Right ventricle myocardium inferior (tissue), 1 donor: ENCODE measurements at regions of chr6 and their contacts with region 1.

Region 1: DNA sequence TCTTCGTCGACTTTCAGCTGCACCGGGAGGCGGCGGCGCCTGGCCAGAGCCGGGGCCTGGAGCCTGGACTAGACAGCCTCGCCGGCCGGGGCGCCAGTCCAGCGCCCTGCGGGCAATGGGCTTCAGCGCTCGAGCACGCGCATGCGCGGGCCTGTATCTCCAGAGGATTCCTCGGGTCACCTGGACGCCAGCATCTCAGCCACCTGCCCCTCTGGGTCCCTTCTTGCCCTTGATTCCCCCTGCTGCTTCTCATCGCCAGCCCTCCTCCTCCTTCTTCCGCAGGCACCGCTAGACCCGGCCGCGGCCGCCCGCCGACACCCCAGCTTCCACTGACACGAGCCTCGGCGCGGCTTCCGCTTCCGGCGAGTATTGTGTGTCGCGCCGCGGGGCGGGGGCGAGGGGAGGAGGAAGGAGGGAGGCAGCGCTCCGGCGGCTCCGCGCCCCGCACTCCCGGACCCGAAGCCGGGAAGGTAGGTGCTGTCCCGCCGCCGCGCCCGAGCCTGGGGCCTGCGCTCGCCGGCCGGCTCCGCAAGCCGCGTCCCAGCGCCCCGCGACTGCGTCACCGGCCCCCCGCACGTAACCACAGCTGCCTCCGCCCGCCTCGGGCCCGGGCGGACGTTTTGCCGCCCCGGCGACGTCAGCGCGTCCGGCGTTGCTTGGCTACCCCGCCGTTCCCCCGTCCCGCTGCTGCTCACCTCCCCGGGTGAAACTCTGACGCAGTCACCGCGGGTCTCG is at the start of gene TRIM39:
- DNase-seq: peak; percentile 98
- ATAC-seq: peak; percentile 91
- total RNA-seq, gene TRIM39: 8.3 TPM

Region 2: DNA sequence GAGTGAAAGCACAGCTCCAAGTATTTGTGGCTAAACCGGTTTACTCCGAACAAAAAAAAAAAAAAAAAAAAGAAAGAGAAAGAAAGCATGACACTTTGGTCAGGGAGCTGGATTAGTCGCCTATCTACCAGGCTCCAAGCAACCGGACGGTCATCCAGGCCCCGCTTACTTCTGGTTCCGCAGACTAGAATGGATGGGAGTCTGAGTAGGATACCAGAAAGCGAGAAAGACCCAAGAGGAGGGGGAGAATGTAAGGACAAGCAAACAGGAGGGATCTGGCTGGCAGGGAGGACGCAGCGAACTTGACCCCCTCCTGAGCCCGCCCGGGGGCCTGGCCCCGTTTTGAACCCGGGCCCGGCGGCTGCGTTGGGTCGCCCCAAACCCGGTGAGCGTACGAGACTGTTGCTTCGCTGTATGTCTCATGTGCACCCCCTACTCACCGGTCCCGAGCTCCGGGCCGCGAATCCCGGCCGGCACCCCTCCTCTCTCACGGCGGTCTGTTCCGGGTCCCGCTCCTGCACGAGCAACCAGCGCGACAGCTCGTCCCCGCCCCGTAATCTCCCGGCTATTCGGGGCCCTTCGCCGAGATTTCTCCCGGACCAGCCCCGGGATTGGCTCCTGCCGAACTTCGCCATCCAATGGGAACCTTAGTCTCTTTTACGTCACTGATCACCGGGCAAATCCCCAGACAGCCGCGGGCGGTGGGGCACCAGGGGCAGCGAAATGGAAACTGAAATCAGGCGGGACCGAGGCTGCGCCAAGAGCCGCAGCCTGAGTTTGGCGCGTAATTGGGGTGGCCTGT is 113.6 kb before region 1 on chr6 and contains the start of gene TRIM26:
- intact Hi-C with region 1: loop called (anchors 2 kb)
- DNase-seq: peak; percentile 97
- ATAC-seq: peak; percentile 97
- total RNA-seq, gene TRIM26: 20.6 TPM

Region 3: DNA sequence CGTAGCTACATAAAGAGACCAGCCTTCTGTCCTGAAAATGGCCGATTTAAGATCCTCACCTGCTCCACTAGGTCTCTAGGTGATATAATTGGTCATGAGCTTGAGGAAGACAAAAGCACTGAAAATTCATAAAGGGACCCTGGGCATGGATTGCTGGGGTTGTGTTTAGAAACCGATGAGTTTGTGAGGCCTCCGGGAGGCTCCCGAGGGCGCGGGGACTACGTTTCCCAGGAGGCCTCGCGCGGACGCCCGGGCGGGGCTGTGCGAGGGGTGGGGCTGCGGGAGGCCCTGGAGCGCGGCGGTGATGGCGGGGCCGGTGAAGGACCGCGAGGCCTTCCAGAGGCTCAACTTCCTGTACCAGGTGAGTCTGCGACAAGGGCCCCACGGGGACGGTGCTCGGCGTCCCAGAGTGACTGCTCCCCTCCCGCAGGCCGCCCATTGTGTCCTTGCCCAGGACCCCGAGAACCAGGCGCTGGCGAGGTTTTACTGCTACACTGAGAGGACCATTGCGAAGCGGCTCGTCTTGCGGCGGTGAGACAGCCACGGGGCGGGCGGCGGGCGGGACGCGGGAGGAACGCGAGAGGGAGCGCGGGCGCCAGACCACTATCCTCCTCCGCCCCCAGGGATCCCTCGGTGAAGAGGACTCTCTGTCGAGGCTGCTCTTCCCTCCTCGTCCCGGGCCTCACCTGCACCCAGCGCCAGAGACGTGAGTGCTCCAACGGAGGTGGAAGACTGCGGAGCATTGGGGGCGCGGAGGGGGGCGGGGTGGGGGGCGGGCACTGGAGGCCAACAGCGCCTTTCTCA is 18.4 kb after region 1 on chr6 and contains the start of gene RPP21:
- intact Hi-C with region 1: loop called (anchors 2 kb)
- DNase-seq: peak; percentile 94
- ATAC-seq: peak; percentile 99
- total RNA-seq, gene RPP21: 33.6 TPM

Region 4: GRCh38 chr6:30357678-30358540 is 31.2 kb after region 1 on chr6:
- intact Hi-C with region 1: no loop called
- DNase-seq: no peak
- ATAC-seq: peak; percentile 50